Sigmoid colon (tissue), 7 donors: ENCODE measurements at regions of chr3 and their contacts with region 1.

Region 1: DNA sequence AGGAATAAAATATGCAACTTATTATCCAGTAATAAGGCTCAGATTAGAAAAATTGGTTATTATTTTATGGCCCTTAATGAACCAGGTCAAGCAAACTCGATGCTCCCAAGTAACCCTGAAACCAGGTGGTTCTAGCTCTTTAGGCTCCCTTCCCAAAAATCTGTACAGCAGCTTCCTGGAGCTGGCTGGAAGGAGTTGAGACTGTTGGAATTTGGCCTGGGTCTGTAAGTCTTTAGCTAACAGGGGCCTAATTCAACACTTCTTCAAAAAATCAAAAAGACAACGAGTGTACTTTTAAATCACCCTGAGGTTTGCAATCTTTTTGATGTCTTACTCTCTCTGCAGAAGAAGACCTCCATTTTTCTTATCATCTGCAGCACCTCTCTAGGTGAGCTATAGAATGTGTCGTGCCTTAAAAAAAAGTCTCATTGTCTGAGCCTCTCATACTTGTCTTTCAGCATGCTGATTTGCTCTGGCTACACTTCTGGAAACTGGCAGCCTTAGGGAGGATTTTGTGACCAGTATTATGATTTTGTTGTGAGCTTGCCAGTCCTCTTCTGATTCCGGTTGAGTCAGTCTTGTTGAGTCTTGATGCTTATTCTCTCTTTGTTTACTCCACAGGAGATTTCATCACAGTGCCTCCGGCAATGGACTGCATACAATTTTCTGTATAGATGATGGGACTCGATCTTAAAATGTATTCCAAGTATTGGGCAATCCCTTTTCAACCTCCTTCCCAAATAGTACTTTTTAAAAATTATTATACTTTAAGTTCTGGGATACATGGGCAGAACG is 235.0 kb upstream of the KBTBD8 start:
- DNase-seq: no peak
- H3K4me3 ChIP-seq: no peak overlapping the region
- H3K27ac ChIP-seq: peak overlapping the region in 1 of 4 donors; percentile 34
- H3K4me1 ChIP-seq: no peaks in the 10 kb centered on the region
- H3K27me3 ChIP-seq: no peaks in the 10 kb centered on the region
- CTCF ChIP-seq: no peak
- EP300 ChIP-seq: no peak
- POLR2A ChIP-seq: no peak

Region 2: GRCh38 chr3:66797889-66798560 is 34.9 kb after region 1 on chr3:
- intact Hi-C with region 1: loop called (anchors 5 kb)
- DNase-seq: peak; percentile 82
- H3K4me3 ChIP-seq: peak overlapping the region in 2 of 4 donors; percentile 16 to 27
- H3K27ac ChIP-seq: peak overlapping the region in 1 of 4 donors; percentile 6
- H3K4me1 ChIP-seq: peaks cover 0 to 5% (median 0%) of the 10 kb centered on the region in 4 donors
- H3K27me3 ChIP-seq: no peaks in the 10 kb centered on the region
- CTCF ChIP-seq: no peak
- EP300 ChIP-seq: no peak
- POLR2A ChIP-seq: no peak